Heart right ventricle (tissue), 16 donors: ENCODE measurements at regions of chr21 and their contacts with region 1.

Region 1: DNA sequence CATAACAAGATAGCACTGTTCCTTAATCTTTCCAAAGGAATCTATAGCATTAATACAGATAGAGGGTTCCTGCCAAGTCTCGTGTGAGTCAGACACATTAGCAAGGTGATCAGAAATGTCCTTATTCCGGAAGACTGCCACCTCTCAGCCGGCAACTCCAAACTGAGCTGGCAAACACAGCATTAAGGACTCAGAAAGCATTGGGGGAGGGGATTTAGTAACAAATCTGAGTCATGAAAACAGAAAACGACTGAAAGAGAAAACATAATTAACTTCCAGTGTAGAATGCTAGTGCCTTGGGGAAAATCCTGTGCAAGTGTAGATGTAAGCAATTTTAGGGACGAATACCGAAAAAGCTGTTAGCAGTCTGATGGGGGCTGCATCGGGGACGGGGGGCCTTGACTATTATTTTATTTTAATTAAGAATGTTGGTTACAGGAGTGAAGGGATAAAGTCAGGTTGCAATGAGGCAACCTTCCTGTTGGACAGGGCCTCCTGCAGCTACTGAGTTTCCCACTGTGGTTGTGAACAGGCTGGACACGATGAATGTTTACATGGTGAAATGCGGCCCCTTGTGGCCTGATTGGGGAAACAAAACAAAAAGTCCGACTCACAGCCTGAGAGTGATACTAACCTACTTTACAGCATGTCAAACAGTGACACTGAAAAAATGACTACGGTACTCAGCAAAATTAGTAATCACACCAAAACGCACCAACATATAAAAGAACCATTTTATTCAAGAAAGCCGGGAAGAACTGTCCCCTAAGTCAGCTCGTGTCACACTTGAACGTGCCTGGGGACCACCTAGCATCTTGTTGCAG is 20.7 kb downstream of the MIS18A start:
- DNase-seq: peak; percentile 43 to 67
- ATAC-seq: peak; percentile 75 to 85 (median 81)
- H3K4me3 ChIP-seq: no peak overlapping the region
- H3K27ac ChIP-seq: no peak overlapping the region
- H3K4me1 ChIP-seq: peaks cover 7 to 33% (median 17%) of the 10 kb centered on the region in 9 donors
- H3K27me3 ChIP-seq: no peaks in the 10 kb centered on the region
- CTCF ChIP-seq: peak; percentile 42 to 84 (median 72)

Region 2: DNA sequence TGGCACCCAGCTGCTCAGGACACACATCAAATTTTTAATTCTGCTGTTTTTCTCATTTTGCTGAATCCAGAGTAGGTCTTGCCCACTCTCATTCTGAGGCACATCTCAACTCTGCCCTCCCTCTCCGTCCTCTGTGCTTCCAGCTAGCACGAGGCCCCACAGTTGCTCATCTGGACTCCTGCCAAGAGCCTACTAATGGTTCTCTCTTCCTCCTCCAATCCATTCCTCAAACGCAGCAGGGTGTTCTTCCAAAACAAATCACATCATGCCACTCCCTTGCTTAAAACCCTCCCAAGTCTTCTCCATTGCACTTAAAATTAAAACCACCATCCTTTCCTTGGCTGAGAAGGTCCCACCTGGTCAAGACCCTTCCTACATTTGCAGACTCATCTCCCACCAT is 476.4 kb before region 1 on chr21:
- intact Hi-C with region 1: loop called in 8 of 10 experiments (anchors 1 to 10 kb)
- DNase-seq: peak in 1 of 2 donors; percentile 39
- ATAC-seq: peak in 5 of 8 donors; percentile 39 to 65 (median 52)
- H3K4me3 ChIP-seq: no peak overlapping the region
- H3K27ac ChIP-seq: no peak overlapping the region
- H3K4me1 ChIP-seq: peaks cover 0 to 5% (median 0%) of the 10 kb centered on the region in 9 donors
- H3K27me3 ChIP-seq: no peaks in the 10 kb centered on the region
- CTCF ChIP-seq: no peak

Region 3: GRCh38 chr21:31866077-31866511 is 392.1 kb before region 1 on chr21:
- intact Hi-C with region 1: loop called (anchors 1 to 5 kb)
- DNase-seq: peak; percentile 83 to 88
- ATAC-seq: peak; percentile 93 to 97 (median 96)
- H3K4me3 ChIP-seq: no peak overlapping the region
- H3K27ac ChIP-seq: no peak overlapping the region
- H3K4me1 ChIP-seq: peaks cover 0 to 9% (median 2%) of the 10 kb centered on the region in 9 donors
- H3K27me3 ChIP-seq: peaks cover 0 to 19% (median 9%) of the 10 kb centered on the region in 7 donors
- CTCF ChIP-seq: peak; percentile 72 to 95 (median 92)

Region 4: DNA sequence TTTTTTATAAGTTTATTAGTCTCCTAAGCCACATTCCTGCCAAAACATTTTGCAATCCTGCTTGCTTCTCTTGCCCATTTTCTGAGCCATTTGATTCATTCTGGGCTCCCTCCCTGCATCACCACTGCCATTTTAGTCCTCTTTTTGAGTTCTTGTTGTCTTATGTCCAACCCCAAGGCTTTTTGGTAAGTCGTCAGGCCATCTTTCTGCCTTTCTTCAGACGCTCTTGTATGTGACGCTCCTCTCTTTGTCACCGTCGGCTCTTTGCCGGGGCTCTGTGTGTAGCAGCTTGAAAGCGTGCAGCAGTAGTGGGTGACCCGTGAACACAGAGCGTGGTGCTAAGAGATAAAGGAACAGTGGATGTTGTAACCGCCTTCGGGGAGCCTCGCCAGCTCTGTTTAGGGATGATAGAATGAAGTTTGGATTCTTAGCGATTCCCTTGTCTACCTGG is 370.8 kb before region 1 on chr21:
- intact Hi-C with region 1: no loop called
- DNase-seq: peak in 1 of 2 donors; percentile 20
- ATAC-seq: peak in 2 of 8 donors; percentile 68 to 72
- H3K4me3 ChIP-seq: no peak overlapping the region
- H3K27ac ChIP-seq: no peak overlapping the region
- H3K4me1 ChIP-seq: no peaks in the 10 kb centered on the region
- H3K27me3 ChIP-seq: peaks cover 0 to 9% (median 0%) of the 10 kb centered on the region in 7 donors
- CTCF ChIP-seq: no peak

Region 5: GRCh38 chr21:31991356-31992331 is 266.5 kb before region 1 on chr21:
- intact Hi-C with region 1: loop called in 3 of 10 experiments (anchors 5 to 10 kb)
- DNase-seq: no peak
- ATAC-seq: no peak
- H3K4me3 ChIP-seq: no peak overlapping the region
- H3K27ac ChIP-seq: no peak overlapping the region
- H3K4me1 ChIP-seq: peaks cover 0 to 10% (median 0%) of the 10 kb centered on the region in 9 donors
- H3K27me3 ChIP-seq: no peaks in the 10 kb centered on the region
- CTCF ChIP-seq: peak in 4 of 9 donors; percentile 7 to 17 (median 14)

Region 6: GRCh38 chr21:32096411-32096810 is 161.8 kb before region 1 on chr21:
- intact Hi-C with region 1: loop called in 3 of 10 experiments (anchors 5 to 10 kb)
- DNase-seq: peak in 1 of 2 donors; percentile 17
- ATAC-seq: peak in 4 of 8 donors; percentile 14 to 44 (median 41)
- H3K4me3 ChIP-seq: no peak overlapping the region
- H3K27ac ChIP-seq: no peak overlapping the region
- H3K4me1 ChIP-seq: peaks cover 0 to 5% (median 0%) of the 10 kb centered on the region in 9 donors
- H3K27me3 ChIP-seq: no peaks in the 10 kb centered on the region
- CTCF ChIP-seq: peak in 7 of 9 donors; percentile 28 to 49 (median 37)

Region 7: GRCh38 chr21:32359711-32360260 is 101.6 kb after region 1 on chr21:
- intact Hi-C with region 1: no loop called
- DNase-seq: no peak
- ATAC-seq: peak in 1 of 8 donors; percentile 12
- H3K4me3 ChIP-seq: no peak overlapping the region
- H3K27ac ChIP-seq: peak overlapping the region in 1 of 10 donors; percentile 25
- H3K4me1 ChIP-seq: peaks cover 0 to 32% (median 10%) of the 10 kb centered on the region in 9 donors
- H3K27me3 ChIP-seq: no peaks in the 10 kb centered on the region
- CTCF ChIP-seq: peak in 4 of 9 donors; percentile 23 to 38 (median 24)